ENCODE measurements at regions of chr6 and their contacts with region 1.

Region 1: GRCh38 chr6:16761471-16762267 is 409 bp upstream of the ATXN1 start:
- DNase-seq: peak; percentile 92
- H3K4me3 Mint-ChIP-seq: peak overlapping the region; percentile 94
- H3K27ac Mint-ChIP-seq: peak overlapping the region; percentile 93
- H3K4me1 Mint-ChIP-seq: peaks cover 58% of the 10 kb centered on the region
- H3K27me3 Mint-ChIP-seq: no peaks in the 10 kb centered on the region

Region 2: DNA sequence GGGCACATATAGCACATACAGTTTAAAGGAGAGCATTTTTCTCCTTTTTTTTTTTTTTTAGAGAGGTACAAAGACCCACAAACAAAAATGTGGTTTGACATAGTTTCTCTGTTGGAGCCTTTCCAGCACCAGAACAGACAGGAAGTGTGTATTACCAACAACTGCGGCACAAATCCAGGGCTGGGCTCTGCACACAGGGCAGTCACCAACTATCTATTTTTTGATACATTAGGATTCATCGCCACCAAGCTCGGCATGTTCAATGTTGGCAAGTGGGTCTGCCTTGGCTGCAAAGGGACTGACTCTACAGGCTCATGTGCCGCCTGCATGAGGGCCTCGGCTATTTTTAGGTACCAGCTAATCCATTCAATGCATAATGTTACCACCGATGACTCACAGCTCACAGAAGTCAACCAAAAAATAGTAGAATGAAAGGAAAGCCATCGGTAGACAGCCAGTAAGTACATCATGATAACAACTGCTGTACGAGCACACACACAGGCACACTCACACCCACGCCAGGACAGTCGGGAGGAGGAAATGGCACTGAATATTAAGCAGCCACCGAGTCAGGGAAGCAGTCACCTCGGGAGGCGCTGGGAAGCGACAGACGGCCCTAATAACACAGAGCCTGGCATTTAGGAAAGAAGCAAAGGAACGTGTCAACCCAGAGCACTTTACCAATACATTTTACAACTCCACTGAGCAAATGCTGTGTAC is 441.7 kb before region 1 on chr6:
- CTCF ChIA-PET with region 1: interaction called, 6 read pairs
- POLR2A ChIA-PET with region 1: interaction called, 6 read pairs
- intact Hi-C with region 1: loop called (anchors 1 kb)
- DNase-seq: peak; percentile 81
- H3K4me3 Mint-ChIP-seq: peak overlapping the region; percentile 50
- H3K27ac Mint-ChIP-seq: peak overlapping the region; percentile 84
- H3K4me1 Mint-ChIP-seq: peaks cover 82% of the 10 kb centered on the region
- H3K27me3 Mint-ChIP-seq: no peaks in the 10 kb centered on the region

Region 3: GRCh38 chr6:16481697-16482399 is 279.8 kb before region 1 on chr6:
- CTCF ChIA-PET with region 1: interaction called, 3 read pairs
- POLR2A ChIA-PET with region 1: interaction called, 5 read pairs
- intact Hi-C with region 1: loop called (anchors 1 kb)
- DNase-seq: peak; percentile 76
- H3K4me3 Mint-ChIP-seq: peak overlapping the region; percentile 47
- H3K27ac Mint-ChIP-seq: peak overlapping the region; percentile 87
- H3K4me1 Mint-ChIP-seq: peaks cover 93% of the 10 kb centered on the region
- H3K27me3 Mint-ChIP-seq: no peaks in the 10 kb centered on the region

Region 4: GRCh38 chr6:16657768-16658167 is 103.9 kb before region 1 on chr6:
- CTCF ChIA-PET with region 1: interaction called, 28 read pairs
- POLR2A ChIA-PET with region 1: interaction called, 10 read pairs
- intact Hi-C with region 1: loop called (anchors 2 kb)
- DNase-seq: no peak
- H3K4me3 Mint-ChIP-seq: peak overlapping the region; percentile 60
- H3K27ac Mint-ChIP-seq: peak overlapping the region; percentile 87
- H3K4me1 Mint-ChIP-seq: peaks cover 80% of the 10 kb centered on the region
- H3K27me3 Mint-ChIP-seq: no peaks in the 10 kb centered on the region

Region 5: GRCh38 chr6:16704401-16705045 is 57.1 kb before region 1 on chr6:
- CTCF ChIA-PET with region 1: interaction called, 33 read pairs
- POLR2A ChIA-PET with region 1: interaction called, 55 read pairs
- intact Hi-C with region 1: loop called (anchors 2 kb)
- DNase-seq: peak; percentile 86
- H3K4me3 Mint-ChIP-seq: peak overlapping the region; percentile 87
- H3K27ac Mint-ChIP-seq: peak overlapping the region; percentile 87
- H3K4me1 Mint-ChIP-seq: peaks cover 69% of the 10 kb centered on the region
- H3K27me3 Mint-ChIP-seq: no peaks in the 10 kb centered on the region

Region 6: GRCh38 chr6:16783509-16783908 is 21.8 kb after region 1 on chr6:
- CTCF ChIA-PET with region 1: no interaction called
- POLR2A ChIA-PET with region 1: no interaction called
- intact Hi-C with region 1: no loop called
- DNase-seq: no peak
- H3K4me3 Mint-ChIP-seq: no peak overlapping the region
- H3K27ac Mint-ChIP-seq: no peak overlapping the region
- H3K4me1 Mint-ChIP-seq: no peaks in the 10 kb centered on the region
- H3K27me3 Mint-ChIP-seq: peaks cover 2% of the 10 kb centered on the region

Region 7: DNA sequence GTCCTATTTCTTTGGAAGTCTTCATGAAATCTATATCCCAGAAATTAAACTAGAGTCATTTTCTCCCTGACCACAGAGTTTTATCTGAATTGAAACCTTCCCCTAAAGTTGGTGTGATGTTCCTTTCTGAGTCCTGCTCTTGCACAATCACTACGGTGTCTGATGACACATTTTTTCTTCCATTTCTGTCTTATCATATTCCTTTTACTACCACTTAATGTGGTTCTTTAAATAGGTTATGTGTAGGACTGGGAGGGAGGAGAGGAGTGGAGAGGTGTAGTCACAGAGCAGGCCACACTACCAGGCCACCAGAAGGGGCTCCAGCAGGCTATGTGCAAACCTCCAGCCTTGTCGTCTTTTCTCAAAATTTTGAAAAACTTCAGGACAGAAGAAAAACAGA is 39.3 kb after region 1 on chr6:
- CTCF ChIA-PET with region 1: interaction called, 4 read pairs
- POLR2A ChIA-PET with region 1: no interaction called
- intact Hi-C with region 1: loop called (anchors 2 kb)
- DNase-seq: peak; percentile 34
- H3K4me3 Mint-ChIP-seq: no peak overlapping the region
- H3K27ac Mint-ChIP-seq: no peak overlapping the region
- H3K4me1 Mint-ChIP-seq: peaks cover 23% of the 10 kb centered on the region
- H3K27me3 Mint-ChIP-seq: no peaks in the 10 kb centered on the region

Region 8: DNA sequence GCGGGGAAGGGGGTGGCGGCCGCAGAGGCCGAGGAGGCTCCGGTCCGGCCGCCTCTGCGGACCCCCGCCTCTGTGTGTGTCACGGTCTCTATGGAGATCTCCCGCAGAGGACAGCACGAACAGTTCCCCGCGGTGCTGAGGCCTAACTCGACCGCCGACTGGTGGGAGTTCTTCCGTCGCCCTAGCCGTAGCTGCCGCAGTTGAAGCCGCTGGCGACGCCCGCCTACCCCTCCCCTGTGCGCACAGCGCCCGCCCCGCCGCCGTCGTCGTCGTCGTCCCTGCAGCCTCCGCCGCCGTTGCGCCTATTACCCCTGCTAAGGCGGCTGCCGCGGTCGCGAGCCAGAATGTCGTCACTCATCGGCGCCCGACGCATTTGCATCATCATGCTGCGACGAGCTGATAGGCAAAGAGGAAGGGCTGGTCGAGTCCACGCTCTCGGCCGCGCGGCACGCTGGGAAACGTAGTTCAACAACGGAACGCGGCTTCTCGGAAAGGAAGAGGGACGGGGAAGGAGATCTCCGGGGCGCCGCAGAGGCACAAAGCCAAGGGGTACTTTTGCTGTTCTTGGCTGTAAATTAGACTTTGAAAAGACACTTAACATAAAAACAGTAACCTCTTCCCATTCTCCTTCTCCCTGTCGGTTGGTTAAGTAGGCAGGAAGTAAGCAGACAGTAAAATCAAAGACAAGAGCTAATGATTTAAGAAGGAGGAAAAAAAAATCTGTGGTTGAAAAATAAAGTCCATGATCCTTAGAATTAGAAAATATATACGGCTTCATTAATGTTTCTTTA is 945.1 kb after region 1 on chr6 and contains the start of gene NUP153:
- CTCF ChIA-PET with region 1: no interaction called
- POLR2A ChIA-PET with region 1: no interaction called
- intact Hi-C with region 1: loop called (anchors 2 kb)
- DNase-seq: peak; percentile 100
- H3K4me3 Mint-ChIP-seq: peak within 1 kb of the TSS; percentile 91
- H3K27ac Mint-ChIP-seq: peak within 1 kb of the TSS; percentile 95
- H3K4me1 Mint-ChIP-seq: peaks cover 26% of the 10 kb centered on the region
- H3K27me3 Mint-ChIP-seq: peaks cover 1% of the 10 kb centered on the region
- total RNA-seq, gene NUP153: 72.4 to 78.2 TPM

Measured in activated CD4-positive, alpha-beta memory T cell treated with anti-CD3 and anti-CD28 coated beads for 36 hours (primary cell).